ENCODE measurements at regions of chr2 and their contacts with region 1.

Region 1: GRCh38 chr2:240434728-240435456 is 571 bp upstream of the GPC1 start:
- DNase-seq: peak; percentile 98
- H3K4me3 Mint-ChIP-seq: peak overlapping the region; percentile 84
- H3K27ac Mint-ChIP-seq: peak overlapping the region; percentile 83
- H3K4me1 Mint-ChIP-seq: peaks cover 13% of the 10 kb centered on the region
- H3K27me3 Mint-ChIP-seq: peaks cover 12% of the 10 kb centered on the region

Region 2: GRCh38 chr2:240149943-240150784 is 284.7 kb before region 1 on chr2:
- intact Hi-C with region 1: loop called (anchors 2 kb)
- DNase-seq: peak; percentile 81
- H3K4me3 Mint-ChIP-seq: no peak overlapping the region
- H3K27ac Mint-ChIP-seq: no peak overlapping the region
- H3K4me1 Mint-ChIP-seq: peaks cover 2% of the 10 kb centered on the region
- H3K27me3 Mint-ChIP-seq: peaks cover 2% of the 10 kb centered on the region

Region 3: DNA sequence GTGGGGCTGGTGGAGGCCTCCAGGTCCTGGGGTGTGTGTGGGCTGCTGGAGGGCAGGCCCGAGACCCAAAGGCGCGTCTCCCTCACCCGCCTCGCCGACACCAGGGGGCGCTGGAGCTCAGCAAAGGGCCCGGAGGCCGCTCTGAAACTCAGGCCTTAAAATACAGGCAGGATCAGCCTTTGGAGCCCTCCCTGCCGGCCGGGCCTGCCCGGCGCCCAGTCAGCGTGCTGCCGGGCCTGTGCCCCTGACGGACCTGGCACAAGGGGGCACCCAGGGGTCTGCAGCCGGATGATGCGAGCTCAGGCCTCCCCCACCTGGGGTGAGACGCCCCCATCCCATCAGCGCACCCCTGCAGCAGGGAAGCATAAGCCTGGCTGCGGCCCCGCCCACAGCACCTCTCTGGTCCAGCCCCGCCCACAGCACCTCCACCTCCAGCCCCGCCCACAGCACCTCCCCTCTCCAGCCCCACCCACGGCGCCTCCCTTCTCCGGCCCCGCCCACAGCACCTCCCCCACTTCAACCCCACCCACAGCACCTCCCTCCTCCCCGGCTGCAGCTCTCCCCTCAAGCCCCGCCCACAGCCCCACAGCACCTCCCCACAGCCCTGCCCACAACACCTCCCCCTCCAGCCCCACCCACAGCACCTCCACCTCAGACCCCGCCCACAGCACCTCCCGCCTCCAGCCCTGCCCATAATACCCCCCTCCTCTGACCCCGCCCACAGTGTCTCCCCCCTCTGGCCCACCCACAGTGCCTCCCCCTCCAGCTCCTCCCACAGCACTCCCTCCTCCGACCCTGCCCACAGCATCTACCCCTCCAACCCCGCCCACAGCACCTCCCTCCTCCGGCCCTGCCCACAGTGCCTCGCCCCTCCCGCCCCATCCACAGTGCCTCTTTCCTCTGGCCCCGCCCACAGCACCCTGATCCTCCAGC is 201.7 kb before region 1 on chr2:
- intact Hi-C with region 1: loop called (anchors 1 kb)
- DNase-seq: peak; percentile 91
- H3K4me3 Mint-ChIP-seq: no peak overlapping the region
- H3K27ac Mint-ChIP-seq: no peak overlapping the region
- H3K4me1 Mint-ChIP-seq: no peaks in the 10 kb centered on the region
- H3K27me3 Mint-ChIP-seq: no peaks in the 10 kb centered on the region

Region 4: GRCh38 chr2:240401781-240402551 is 32.9 kb before region 1 on chr2:
- intact Hi-C with region 1: loop called (anchors 2 kb)
- DNase-seq: no peak
- H3K4me3 Mint-ChIP-seq: no peak overlapping the region
- H3K27ac Mint-ChIP-seq: no peak overlapping the region
- H3K4me1 Mint-ChIP-seq: peaks cover 11% of the 10 kb centered on the region
- H3K27me3 Mint-ChIP-seq: no peaks in the 10 kb centered on the region

Region 5: DNA sequence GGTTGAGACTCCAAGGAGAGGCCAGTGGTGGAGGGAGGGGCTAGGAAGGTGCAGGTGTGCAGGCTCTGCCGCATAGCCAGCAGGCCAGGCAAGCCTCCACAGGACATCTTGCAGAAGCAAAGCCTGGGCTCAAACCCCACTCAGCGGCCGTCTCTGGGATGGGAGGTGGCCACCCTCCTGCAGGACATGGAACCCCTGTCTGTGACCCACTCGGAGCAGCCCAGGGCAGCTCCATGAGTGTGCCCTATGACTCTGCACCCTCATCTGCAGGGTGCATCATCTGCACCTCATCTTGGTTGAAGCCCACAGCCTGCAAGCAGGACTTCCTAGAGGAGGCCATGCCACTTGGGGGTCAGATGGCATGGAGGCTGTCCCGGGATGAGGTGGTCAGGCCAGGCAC is 46.8 kb after region 1 on chr2:
- intact Hi-C with region 1: no loop called
- DNase-seq: no peak
- H3K4me3 Mint-ChIP-seq: no peak overlapping the region
- H3K27ac Mint-ChIP-seq: no peak overlapping the region
- H3K4me1 Mint-ChIP-seq: no peaks in the 10 kb centered on the region
- H3K27me3 Mint-ChIP-seq: no peaks in the 10 kb centered on the region

Region 6: GRCh38 chr2:240566203-240567136 is 131.6 kb after region 1 on chr2:
- intact Hi-C with region 1: loop called (anchors 5 kb)
- DNase-seq: peak; percentile 99
- H3K4me3 Mint-ChIP-seq: peak overlapping the region; percentile 98
- H3K27ac Mint-ChIP-seq: peak overlapping the region; percentile 99
- H3K4me1 Mint-ChIP-seq: peaks cover 63% of the 10 kb centered on the region
- H3K27me3 Mint-ChIP-seq: no peaks in the 10 kb centered on the region